Mammary epithelial cell (primary cell): ENCODE measurements at regions of chr10 and their contacts with region 1.

Region 1: DNA sequence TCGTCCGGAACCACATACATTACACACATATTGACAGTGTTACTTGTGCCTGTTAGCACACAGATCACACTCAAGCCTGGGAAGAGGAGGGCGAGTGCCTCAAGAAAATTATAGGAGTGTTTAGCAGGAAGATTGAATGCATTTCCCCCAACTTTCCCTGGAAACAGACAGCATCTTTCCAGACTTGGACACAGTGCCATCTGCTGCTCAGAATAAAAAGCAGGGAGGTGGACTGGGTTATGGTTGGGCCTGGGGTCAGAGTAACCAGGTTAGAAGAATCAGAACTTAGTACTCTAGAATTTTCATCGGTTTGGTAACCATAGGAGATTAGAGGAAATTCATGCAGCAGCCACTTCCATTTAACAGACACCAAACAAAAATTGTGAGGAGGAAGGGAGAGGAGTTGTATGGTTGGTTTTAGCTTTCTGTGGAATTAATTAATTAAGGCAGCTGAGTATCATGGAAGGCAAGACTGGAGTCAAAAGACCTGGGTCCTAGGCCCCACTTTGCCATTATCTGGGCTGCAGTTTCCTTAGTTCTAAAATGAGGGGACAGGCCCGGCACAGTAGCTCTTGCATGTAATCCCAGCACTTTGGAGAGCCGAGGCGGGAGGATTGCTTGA is 43.4 kb upstream of the OPTN start:
- DNase-seq: peak; percentile 8
- H3K4me3 ChIP-seq: no peak overlapping the region
- H3K27ac ChIP-seq: no peak overlapping the region
- H3K4me1 ChIP-seq: no peaks in the 10 kb centered on the region
- H3K27me3 ChIP-seq: no peaks in the 10 kb centered on the region
- CTCF ChIP-seq: peak; percentile 37 to 65

Region 2: GRCh38 chr10:12264204-12264940 is 792.2 kb before region 1 on chr10:
- CTCF ChIA-PET with region 1: no interaction called
- dilution Hi-C with region 1: no loop called
- in situ Hi-C with region 1: loop called in 1 of 2 experiments (anchors 25 kb)
- intact Hi-C with region 1: loop called (anchors 5 kb)
- DNase-seq: peak; percentile 67
- H3K4me3 ChIP-seq: peak overlapping the region; percentile 15 to 39 (median 19)
- H3K27ac ChIP-seq: no peak overlapping the region
- H3K4me1 ChIP-seq: peaks cover 3% of the 10 kb centered on the region
- H3K27me3 ChIP-seq: no peaks in the 10 kb centered on the region
- CTCF ChIP-seq: peak; percentile 67 to 89

Region 3: GRCh38 chr10:12720217-12720981 is 336.2 kb before region 1 on chr10:
- CTCF ChIA-PET with region 1: no interaction called
- dilution Hi-C with region 1: no loop called
- in situ Hi-C with region 1: loop called in 1 of 2 experiments (anchors 25 kb)
- intact Hi-C with region 1: loop called (anchors 1 kb)
- DNase-seq: peak; percentile 97
- H3K4me3 ChIP-seq: no peak overlapping the region
- H3K27ac ChIP-seq: peak overlapping the region; percentile 36
- H3K4me1 ChIP-seq: peaks cover 40% of the 10 kb centered on the region
- H3K27me3 ChIP-seq: no peaks in the 10 kb centered on the region
- CTCF ChIP-seq: no peak

Region 4: GRCh38 chr10:12782537-12782936 is 274.0 kb before region 1 on chr10:
- CTCF ChIA-PET with region 1: interaction called, 4 read pairs
- dilution Hi-C with region 1: no loop called
- in situ Hi-C with region 1: no loop called
- intact Hi-C with region 1: loop called (anchors 1 kb)
- DNase-seq: peak; percentile 6
- H3K4me3 ChIP-seq: no peak overlapping the region
- H3K27ac ChIP-seq: no peak overlapping the region
- H3K4me1 ChIP-seq: no peaks in the 10 kb centered on the region
- H3K27me3 ChIP-seq: no peaks in the 10 kb centered on the region
- CTCF ChIP-seq: peak; percentile 53 to 67

Region 5: DNA sequence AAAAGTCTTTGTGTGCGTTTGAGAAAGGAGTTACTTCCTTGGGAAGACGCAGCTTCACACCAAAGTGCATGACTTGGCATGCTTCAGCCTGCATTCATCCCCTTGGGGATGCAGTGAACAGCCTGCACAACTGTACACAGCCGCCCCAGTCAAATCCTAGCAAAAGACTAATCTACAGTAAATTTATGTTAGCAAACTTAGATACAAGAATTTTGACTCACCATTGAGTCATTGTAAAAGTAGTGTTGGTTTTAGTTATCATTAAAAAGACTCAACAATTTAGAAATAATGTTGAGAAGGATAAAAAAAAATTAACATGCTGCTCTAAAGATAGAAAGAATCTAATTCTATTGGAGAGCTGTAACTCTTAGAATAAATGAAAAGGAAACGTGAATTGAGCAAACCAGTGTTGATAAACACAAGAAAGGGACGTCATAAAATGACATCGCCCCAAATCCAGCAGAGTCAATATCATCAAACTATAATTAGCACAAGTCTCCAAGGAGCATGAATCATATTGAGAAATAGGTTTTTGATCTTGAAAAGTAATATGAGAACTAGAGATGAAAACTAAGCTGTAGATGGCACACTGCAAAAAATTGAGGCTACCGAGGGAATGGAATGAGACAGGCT is 31.5 kb after region 1 on chr10:
- CTCF ChIA-PET with region 1: no interaction called
- dilution Hi-C with region 1: loop called (anchors 5 kb)
- in situ Hi-C with region 1: no loop called
- intact Hi-C with region 1: no loop called
- DNase-seq: peak; percentile 50
- H3K4me3 ChIP-seq: no peak overlapping the region
- H3K27ac ChIP-seq: no peak overlapping the region
- H3K4me1 ChIP-seq: no peaks in the 10 kb centered on the region
- H3K27me3 ChIP-seq: no peaks in the 10 kb centered on the region
- CTCF ChIP-seq: no peak

Region 6: DNA sequence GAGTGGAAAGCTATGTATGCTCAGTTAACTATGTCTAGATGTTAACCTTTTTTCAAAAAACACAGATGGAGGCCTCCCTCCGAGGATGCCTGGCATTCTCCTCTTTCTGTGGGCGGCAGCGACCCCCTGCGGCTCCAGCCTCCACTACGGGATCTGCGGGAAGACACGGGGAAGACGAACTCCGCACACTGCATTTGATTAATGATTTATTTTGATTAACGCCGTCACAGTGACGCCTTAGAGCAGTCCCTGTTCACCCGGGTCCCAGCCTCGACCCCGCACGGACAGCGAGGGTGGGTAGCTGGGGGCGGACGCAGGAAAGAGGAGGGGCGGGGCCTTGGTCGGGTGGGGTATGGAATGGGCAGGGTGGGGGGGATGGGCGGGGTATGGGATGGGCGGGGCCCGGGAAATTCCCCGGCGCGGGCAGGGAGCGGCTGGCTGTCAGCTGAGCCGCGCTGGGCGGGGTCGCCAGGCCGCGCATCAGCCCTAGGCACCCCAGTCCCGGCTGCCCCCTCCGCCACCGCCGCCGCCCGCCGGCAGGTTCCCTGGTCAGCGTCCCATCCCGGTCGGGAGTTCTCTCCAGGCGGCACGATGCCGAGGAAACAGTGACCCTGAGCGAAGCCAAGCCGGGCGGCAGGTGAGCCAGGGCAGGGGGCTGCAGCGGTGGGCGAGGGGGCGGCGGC is 43.2 kb after region 1 on chr10 and contains the start of gene OPTN:
- CTCF ChIA-PET with region 1: no interaction called
- dilution Hi-C with region 1: no loop called
- in situ Hi-C with region 1: no loop called
- intact Hi-C with region 1: loop called (anchors 2 kb)
- DNase-seq: peak; percentile 82
- H3K4me3 ChIP-seq: peak within 1 kb of the TSS; percentile 69 to 95 (median 82)
- H3K27ac ChIP-seq: peak within 1 kb of the TSS; percentile 74
- H3K4me1 ChIP-seq: peaks cover 6% of the 10 kb centered on the region
- H3K27me3 ChIP-seq: no peaks in the 10 kb centered on the region
- CTCF ChIP-seq: peak; percentile 76 to 89
- total RNA-seq, gene OPTN: 60.0 to 142 TPM